ENCODE measurements at regions of chr9 and their contacts with region 1.

Region 1: GRCh38 chr9:76358593-76359280 is 35.5 kb downstream of the RFK start:
- DNase-seq: no peak
- H3K4me3 ChIP-seq: no peak overlapping the region
- H3K27ac ChIP-seq: no peak overlapping the region
- H3K4me1 ChIP-seq: no peaks in the 10 kb centered on the region
- CTCF ChIP-seq: no peak

Region 2: GRCh38 chr9:76162751-76163500 is 195.8 kb before region 1 on chr9:
- CTCF ChIA-PET with region 1: no interaction called
- POLR2A ChIA-PET with region 1: no interaction called
- intact Hi-C with region 1: no loop called
- DNase-seq: no peak
- H3K4me3 ChIP-seq: no peak overlapping the region
- H3K27ac ChIP-seq: no peak overlapping the region
- H3K4me1 ChIP-seq: no peaks in the 10 kb centered on the region
- CTCF ChIP-seq: no peak

Region 3: DNA sequence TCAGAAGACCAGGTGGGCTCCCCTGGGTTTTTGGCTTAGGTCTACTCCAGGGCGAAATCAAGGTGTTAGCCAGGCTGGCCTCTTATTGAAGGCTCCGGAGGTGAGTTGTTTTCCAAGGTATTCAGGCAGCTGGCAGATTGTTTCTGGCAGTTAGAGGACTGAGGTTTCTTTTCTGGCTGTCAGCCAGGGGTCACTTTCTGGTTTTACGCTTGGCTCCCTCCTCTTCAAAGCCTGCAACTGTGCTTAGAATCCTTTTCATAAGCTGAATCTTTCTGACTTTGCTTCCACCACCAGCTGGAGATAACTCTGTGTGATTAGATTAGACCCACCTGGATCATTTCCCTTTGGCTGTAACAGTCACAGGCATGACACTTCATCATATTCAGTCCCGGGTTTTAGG is 10.8 kb after region 1 on chr9:
- CTCF ChIA-PET with region 1: no interaction called
- POLR2A ChIA-PET with region 1: interaction called, 20 read pairs
- intact Hi-C with region 1: no loop called
- DNase-seq: peak; percentile 86
- H3K4me3 ChIP-seq: peak overlapping the region; percentile 19
- H3K27ac ChIP-seq: peak overlapping the region; percentile 88
- H3K4me1 ChIP-seq: peaks cover 63% of the 10 kb centered on the region
- CTCF ChIP-seq: no peak

Measured in OCI-LY7 (cell line).